ENCODE measurements at regions of chr14 and their contacts with region 1.

Region 1: DNA sequence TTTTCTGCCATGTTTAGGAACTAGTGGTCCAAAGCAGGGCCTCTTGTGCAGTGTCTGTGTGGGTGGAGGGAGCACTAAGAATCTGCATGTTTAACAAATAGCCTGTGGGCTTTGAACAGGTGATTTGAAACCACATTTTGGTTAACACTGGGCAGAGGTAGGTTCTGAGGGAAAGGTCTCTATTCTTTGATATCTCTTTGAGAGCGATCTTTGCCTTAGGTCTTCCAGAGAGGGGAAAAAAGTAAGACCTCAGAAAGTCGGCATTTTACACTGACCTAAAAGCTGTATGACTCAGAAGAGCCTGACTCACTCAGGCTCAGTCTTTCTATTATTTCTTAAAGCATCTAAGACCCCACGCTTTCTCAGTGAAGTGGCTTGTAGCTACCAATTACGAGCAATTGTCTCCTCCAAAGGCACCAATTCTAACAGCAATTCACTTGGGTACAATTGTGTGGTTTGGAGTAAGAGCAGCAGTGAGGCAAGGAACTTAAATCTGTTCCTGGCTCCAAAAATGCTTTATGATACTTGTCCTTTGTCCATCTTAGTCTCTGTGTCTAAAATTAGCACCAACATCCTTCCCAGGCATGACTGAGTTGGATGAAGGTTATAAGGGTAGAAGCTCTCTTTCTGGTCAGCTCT is 8.8 kb downstream of the EIF2B2 start:
- DNase-seq: no peak

Region 2: DNA sequence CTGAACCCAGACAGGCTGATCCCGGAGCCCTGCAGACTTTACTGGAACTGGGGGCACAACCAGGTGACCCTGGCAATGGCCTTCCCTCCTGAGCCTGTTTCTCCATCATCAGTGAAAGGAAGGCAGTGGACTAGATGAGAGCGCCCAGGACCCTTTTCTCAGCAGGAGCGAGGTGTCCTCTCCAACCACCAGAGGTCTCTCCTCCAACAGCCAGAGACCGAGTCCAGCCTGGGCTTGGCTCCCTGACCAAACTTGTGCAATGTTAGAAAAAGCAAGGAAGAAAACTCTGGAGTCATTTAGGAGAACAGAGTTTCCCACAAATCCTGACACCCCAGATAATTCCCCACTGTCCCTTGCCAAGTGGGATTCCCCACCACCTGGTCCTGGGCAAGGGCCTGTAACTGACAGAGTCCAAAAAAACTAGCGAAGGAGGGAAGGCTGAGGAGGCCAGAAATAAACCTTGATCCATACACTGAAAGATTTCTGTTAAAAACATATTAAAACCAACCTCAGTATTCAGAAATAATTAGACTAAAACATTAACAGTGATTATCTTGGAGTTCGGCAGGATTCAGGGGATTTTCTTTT is 97.4 kb before region 1 on chr14:
- intact Hi-C with region 1: loop called (anchors 5 kb)
- DNase-seq: peak; percentile 81